ENCODE measurements at regions of chr17 and their contacts with region 1.

Region 1: DNA sequence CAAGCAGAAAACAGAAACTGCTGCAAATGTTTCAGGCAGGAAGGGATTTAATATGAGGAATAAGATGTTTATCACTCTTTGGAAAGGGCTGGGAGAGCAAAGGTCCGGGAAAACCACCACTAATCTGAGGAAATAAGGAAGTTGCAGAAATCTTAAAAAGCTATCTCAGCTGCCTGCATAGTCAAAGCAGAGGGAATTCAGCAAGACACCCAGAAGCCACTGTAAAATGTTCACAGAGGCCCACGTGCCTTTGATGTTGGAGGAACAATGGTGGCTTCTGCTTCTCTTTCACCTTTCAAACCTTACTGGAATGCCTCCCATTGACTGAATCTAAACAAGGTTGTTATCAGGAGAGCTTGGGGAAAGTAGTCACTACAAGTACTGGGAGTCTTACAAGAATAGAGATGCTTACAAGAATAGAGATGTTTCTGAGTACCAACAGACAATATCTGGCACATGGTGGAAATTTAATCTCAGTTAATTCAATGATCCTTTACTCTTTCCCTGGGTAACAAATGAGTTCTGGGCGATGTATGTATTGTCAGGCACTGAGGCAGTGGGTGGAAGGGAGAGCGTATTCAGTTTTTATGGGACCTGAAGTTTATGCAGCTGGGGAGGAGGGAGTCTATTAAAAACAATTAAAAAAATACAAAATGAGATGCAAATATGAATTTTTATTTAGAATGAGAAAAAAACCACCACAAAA is 56.1 kb upstream of the MED13 start:
- DNase-seq: peak; percentile 58 to 63
- H3K4me3 ChIP-seq: no peak overlapping the region
- H3K4me3 Mint-ChIP-seq: peak overlapping the region; percentile 22
- H3K27ac Mint-ChIP-seq: peak overlapping the region; percentile 83
- H3K4me1 ChIP-seq: peaks cover 22% of the 10 kb centered on the region
- H3K4me1 Mint-ChIP-seq: peaks cover 42% of the 10 kb centered on the region
- H3K27me3 ChIP-seq: no peaks in the 10 kb centered on the region
- H3K27me3 Mint-ChIP-seq: no peaks in the 10 kb centered on the region
- CTCF ChIP-seq: no peak

Region 2: GRCh38 chr17:62093188-62094155 is 27.7 kb before region 1 on chr17:
- CTCF ChIA-PET with region 1: no interaction called
- POLR2A ChIA-PET with region 1: no interaction called
- intact Hi-C with region 1: no loop called
- DNase-seq: no peak
- H3K4me3 ChIP-seq: no peak overlapping the region
- H3K4me3 Mint-ChIP-seq: no peak overlapping the region
- H3K27ac Mint-ChIP-seq: no peak overlapping the region
- H3K4me1 ChIP-seq: peaks cover 7% of the 10 kb centered on the region; the same call in 1 of the 2 replicates
- H3K4me1 Mint-ChIP-seq: peaks cover 10% of the 10 kb centered on the region
- H3K27me3 ChIP-seq: no peaks in the 10 kb centered on the region
- H3K27me3 Mint-ChIP-seq: no peaks in the 10 kb centered on the region
- CTCF ChIP-seq: no peak

Region 3: GRCh38 chr17:62164763-62165753 is 43.9 kb after region 1 on chr17:
- CTCF ChIA-PET with region 1: no interaction called
- POLR2A ChIA-PET with region 1: no interaction called
- intact Hi-C with region 1: loop called (anchors 2 kb)
- DNase-seq: peak; percentile 63 to 67
- H3K4me3 ChIP-seq: no peak overlapping the region
- H3K4me3 Mint-ChIP-seq: peak overlapping the region; percentile 60
- H3K27ac Mint-ChIP-seq: peak overlapping the region; percentile 73
- H3K4me1 ChIP-seq: peaks cover 53% of the 10 kb centered on the region
- H3K4me1 Mint-ChIP-seq: peaks cover 40% of the 10 kb centered on the region
- H3K27me3 ChIP-seq: no peaks in the 10 kb centered on the region
- H3K27me3 Mint-ChIP-seq: no peaks in the 10 kb centered on the region
- CTCF ChIP-seq: no peak